Caco-2 (cell line): ENCODE measurements at regions of chr7 and their contacts with region 1.

Region 1: DNA sequence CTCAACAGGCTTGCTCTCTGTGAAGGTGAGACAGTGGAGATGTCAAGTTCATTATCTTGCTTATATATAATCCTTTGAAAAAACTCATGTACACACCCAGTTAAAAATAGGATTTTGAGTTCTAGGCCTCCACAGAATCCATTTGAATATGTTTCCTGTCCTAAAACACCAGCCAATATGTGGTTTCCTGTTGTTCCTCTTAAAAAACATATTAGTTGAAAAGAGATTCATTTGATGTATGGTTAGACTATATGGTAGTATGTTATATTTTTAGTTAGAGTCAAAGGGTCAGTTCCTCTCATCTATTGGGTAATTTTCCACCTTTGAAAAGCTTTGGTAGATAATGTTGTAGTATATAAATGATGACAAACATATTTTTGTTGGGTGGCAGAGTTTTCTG is 16.0 kb downstream of the PPP1R9A start:
- DNase-seq: no peak
- H3K4me3 ChIP-seq: no peak overlapping the region
- H3K4me3 Mint-ChIP-seq: no peak overlapping the region
- H3K27ac Mint-ChIP-seq: no peak overlapping the region
- H3K4me1 ChIP-seq: no peaks in the 10 kb centered on the region; the same call in 1 of the 2 replicates
- H3K4me1 Mint-ChIP-seq: peaks cover 10% of the 10 kb centered on the region
- H3K27me3 ChIP-seq: no peaks in the 10 kb centered on the region
- H3K27me3 Mint-ChIP-seq: no peaks in the 10 kb centered on the region
- CTCF ChIP-seq: no peak

Region 2: GRCh38 chr7:94962661-94963060 is 39.2 kb after region 1 on chr7:
- CTCF ChIA-PET with region 1: no interaction called
- POLR2A ChIA-PET with region 1: no interaction called
- intact Hi-C with region 1: loop called (anchors 1 kb)
- DNase-seq: no peak
- H3K4me3 ChIP-seq: no peak overlapping the region
- H3K4me3 Mint-ChIP-seq: no peak overlapping the region
- H3K27ac Mint-ChIP-seq: no peak overlapping the region
- H3K4me1 ChIP-seq: peaks cover 19% of the 10 kb centered on the region
- H3K4me1 Mint-ChIP-seq: peaks cover 17% of the 10 kb centered on the region
- H3K27me3 ChIP-seq: no peaks in the 10 kb centered on the region
- H3K27me3 Mint-ChIP-seq: no peaks in the 10 kb centered on the region
- CTCF ChIP-seq: no peak